ENCODE measurements at regions of chr14 and their contacts with region 1.

Region 1: DNA sequence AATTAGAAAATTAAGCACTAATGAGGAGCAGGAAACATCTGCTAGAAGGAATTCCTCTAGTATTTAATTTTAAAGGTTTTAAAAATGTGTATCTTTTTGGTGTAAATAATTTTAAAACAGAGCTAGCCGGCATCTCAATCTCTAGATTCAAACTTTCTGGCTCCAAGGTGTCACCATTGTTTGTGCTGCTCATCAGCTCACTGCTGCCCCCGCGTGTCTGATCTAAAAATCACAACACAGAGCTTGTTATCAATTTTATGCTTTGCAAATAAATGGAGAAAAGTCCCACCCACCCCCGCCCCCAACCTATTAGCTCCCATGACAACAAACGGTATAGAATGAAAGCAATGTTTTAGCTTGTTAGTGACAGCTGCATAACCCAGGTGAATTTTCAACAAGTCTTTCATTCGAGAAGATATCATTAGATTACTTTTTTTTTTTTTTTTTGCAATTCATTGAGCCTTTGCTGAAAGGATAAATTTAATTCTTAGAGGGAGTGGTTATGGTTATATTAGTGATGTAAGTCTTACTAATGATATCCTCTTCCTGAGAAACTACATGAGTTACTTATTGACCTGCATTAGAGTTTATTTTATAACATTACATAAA is 11.3 kb upstream of the ABHD12B start:
- DNase-seq: peak; percentile 91
- H3K4me3 Mint-ChIP-seq: peak overlapping the region; percentile 80
- H3K27ac Mint-ChIP-seq: no peak overlapping the region
- H3K4me1 Mint-ChIP-seq: peaks cover 11% of the 10 kb centered on the region
- H3K27me3 Mint-ChIP-seq: no peaks in the 10 kb centered on the region

Region 2: DNA sequence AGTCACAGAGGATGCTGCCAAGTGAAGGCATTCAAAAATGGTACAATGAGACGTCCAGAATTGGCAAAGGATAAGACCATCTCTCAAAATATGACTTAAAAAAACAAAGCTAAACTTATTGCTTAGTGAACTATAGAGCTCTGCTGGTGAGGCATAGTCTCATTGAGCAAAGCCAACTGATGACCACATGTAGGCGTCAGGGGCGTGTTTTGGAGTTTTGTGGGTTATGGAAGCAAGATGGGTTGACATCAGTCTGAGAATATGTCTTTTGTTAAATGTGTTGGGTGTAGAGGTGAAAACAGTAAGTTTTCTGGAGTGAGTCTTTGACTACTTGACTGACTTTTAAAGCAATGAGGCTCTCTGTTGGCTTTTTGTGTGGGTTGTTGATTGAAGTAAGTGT is 253.4 kb before region 1 on chr14:
- CTCF ChIA-PET with region 1: interaction called, 24 read pairs
- POLR2A ChIA-PET with region 1: no interaction called
- intact Hi-C with region 1: no loop called
- DNase-seq: peak; percentile 80
- H3K4me3 Mint-ChIP-seq: no peak overlapping the region
- H3K27ac Mint-ChIP-seq: no peak overlapping the region
- H3K4me1 Mint-ChIP-seq: peaks cover 7% of the 10 kb centered on the region
- H3K27me3 Mint-ChIP-seq: peaks cover 4% of the 10 kb centered on the region

Region 3: GRCh38 chr14:50726372-50727107 is 134.0 kb before region 1 on chr14:
- CTCF ChIA-PET with region 1: interaction called, 4 read pairs
- POLR2A ChIA-PET with region 1: no interaction called
- intact Hi-C with region 1: loop called (anchors 5 kb)
- DNase-seq: peak; percentile 24
- H3K4me3 Mint-ChIP-seq: peak overlapping the region; percentile 45
- H3K27ac Mint-ChIP-seq: peak overlapping the region; percentile 94
- H3K4me1 Mint-ChIP-seq: peaks cover 33% of the 10 kb centered on the region
- H3K27me3 Mint-ChIP-seq: no peaks in the 10 kb centered on the region

Region 4: DNA sequence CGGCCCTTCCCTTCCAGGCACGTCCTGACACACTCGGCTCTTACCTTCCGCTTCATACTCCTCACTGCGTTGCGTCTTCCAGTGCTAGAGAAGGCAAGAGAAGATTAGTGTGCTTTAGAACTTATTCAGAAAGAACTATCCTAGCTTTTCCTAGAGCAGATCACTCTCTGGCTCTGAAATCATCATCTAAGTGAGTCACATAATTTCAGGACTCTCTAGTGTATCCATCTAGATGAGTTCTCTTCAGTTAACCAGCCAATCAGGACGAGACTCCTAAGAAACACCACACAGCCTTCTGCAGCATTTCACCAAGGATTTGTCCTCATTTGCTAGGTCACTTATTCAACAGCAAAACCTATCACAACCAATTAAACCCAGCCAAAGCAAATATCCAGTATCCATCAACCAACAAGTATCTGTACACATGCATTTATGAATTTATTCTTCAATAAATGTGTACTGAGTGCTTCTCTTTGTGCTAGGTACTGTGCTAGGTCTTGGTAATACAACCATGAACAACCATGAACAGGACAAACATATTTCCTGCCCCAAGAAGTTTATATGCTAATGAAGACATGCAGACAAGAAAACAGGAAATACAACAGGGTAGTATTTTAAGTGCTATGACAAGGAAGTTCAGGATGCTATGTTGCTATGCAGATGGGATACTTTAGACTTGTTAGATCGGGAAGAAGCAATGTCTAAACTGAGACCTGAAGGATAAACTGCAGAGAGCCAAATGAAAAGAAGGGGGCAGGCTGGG is 81.7 kb before region 1 on chr14:
- CTCF ChIA-PET with region 1: interaction called, 123 read pairs
- POLR2A ChIA-PET with region 1: interaction called, 3 read pairs
- intact Hi-C with region 1: loop called (anchors 1 kb)
- DNase-seq: no peak
- H3K4me3 Mint-ChIP-seq: no peak overlapping the region
- H3K27ac Mint-ChIP-seq: no peak overlapping the region
- H3K4me1 Mint-ChIP-seq: peaks cover 26% of the 10 kb centered on the region
- H3K27me3 Mint-ChIP-seq: no peaks in the 10 kb centered on the region

Region 5: DNA sequence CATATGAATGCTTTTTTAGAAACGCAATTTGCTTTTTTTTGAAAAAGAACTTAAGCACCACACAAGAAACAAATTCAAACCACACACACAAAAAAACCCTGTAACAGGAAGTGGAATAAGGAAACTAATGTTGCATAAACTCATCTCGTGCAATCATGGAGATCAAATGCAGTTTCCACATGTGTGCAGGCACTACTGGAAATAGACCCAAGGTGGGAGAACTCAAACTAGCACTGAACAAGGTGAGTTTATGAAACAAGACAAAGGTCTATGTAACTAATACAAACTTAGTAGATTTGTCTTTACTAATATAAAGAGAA is 47.1 kb before region 1 on chr14:
- CTCF ChIA-PET with region 1: interaction called, 10 read pairs
- POLR2A ChIA-PET with region 1: no interaction called
- intact Hi-C with region 1: no loop called
- DNase-seq: no peak
- H3K4me3 Mint-ChIP-seq: peak overlapping the region; percentile 73
- H3K27ac Mint-ChIP-seq: peak overlapping the region; percentile 93
- H3K4me1 Mint-ChIP-seq: peaks cover 43% of the 10 kb centered on the region
- H3K27me3 Mint-ChIP-seq: no peaks in the 10 kb centered on the region

Region 6: GRCh38 chr14:50839048-50839447 is 21.5 kb before region 1 on chr14:
- CTCF ChIA-PET with region 1: interaction called, 13 read pairs
- POLR2A ChIA-PET with region 1: interaction called, 4 read pairs
- intact Hi-C with region 1: no loop called
- DNase-seq: peak; percentile 30
- H3K4me3 Mint-ChIP-seq: no peak overlapping the region
- H3K27ac Mint-ChIP-seq: no peak overlapping the region
- H3K4me1 Mint-ChIP-seq: peaks cover 23% of the 10 kb centered on the region
- H3K27me3 Mint-ChIP-seq: no peaks in the 10 kb centered on the region

Measured in activated CD4-positive, alpha-beta memory T cell treated with anti-CD3 and anti-CD28 coated beads for 36 hours (primary cell).